ENCODE measurements at regions of chr5 and their contacts with region 1.

Region 1: GRCh38 chr5:45038366-45038987 is 229.7 kb downstream of the MRPS30 start:
- DNase-seq: peak; percentile 14
- ATAC-seq: peak; percentile 50
- H3K4me3 ChIP-seq: no peak overlapping the region
- H3K27ac ChIP-seq: no peak overlapping the region
- H3K4me1 ChIP-seq: no peaks in the 10 kb centered on the region
- H3K27me3 ChIP-seq: no peaks in the 10 kb centered on the region
- CTCF ChIP-seq: peak; percentile 51
- EP300 ChIP-seq: no peak
- POLR2A ChIP-seq: no peak
- RAD21 ChIP-seq: no peak

Region 2: DNA sequence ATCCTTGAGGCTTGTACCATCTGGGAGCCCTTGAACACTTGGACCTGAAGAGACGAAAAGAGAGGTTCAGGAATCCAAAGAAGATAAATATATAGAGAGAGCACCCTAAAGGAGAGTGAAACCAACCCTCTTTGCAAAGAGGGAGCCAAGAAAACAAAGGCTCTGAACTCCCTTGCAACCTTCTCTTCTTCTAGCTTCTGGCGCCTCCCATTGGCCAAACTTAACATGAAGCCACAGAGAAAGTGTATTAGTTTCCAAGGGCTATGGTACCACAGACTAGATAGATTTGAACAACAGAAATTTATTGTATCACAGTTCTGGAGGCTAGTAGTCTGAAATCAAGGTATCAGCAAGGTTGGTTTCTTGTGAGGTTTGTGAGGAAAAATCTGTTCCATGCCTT is 482.6 kb after region 1 on chr5:
- CTCF ChIA-PET with region 1: no interaction called
- POLR2A ChIA-PET with region 1: no interaction called
- in situ Hi-C with region 1: no loop called
- intact Hi-C with region 1: loop called (anchors 1 kb)
- DNase-seq: peak; percentile 2
- ATAC-seq: no peak
- H3K4me3 ChIP-seq: no peak overlapping the region
- H3K27ac ChIP-seq: no peak overlapping the region
- H3K4me1 ChIP-seq: no peaks in the 10 kb centered on the region
- H3K27me3 ChIP-seq: no peaks in the 10 kb centered on the region
- CTCF ChIP-seq: no peak
- EP300 ChIP-seq: no peak
- POLR2A ChIP-seq: no peak
- RAD21 ChIP-seq: no peak

Region 3: DNA sequence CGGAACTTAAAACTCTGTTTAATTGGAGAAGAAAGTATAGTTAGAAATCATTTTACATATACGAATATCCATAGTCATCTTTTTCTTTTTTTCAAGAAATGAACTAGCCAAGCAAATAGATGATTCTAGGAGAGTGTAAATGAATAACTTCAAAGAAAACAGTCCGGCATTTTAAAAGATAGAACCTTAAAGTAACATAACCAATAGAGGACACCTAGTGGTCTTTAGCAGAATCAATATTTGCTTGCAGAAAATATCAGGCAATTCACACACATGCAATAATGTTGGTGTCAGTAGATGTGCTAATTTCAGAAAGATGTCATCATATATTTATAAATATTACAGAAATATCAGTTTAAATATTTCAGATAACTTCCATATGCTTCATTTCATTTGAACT is 600.6 kb after region 1 on chr5:
- CTCF ChIA-PET with region 1: no interaction called
- POLR2A ChIA-PET with region 1: no interaction called
- in situ Hi-C with region 1: no loop called
- intact Hi-C with region 1: loop called (anchors 1 kb)
- DNase-seq: no peak
- ATAC-seq: no peak
- H3K4me3 ChIP-seq: no peak overlapping the region
- H3K27ac ChIP-seq: no peak overlapping the region
- H3K4me1 ChIP-seq: no peaks in the 10 kb centered on the region
- H3K27me3 ChIP-seq: no peaks in the 10 kb centered on the region; a peak in 1 of 5 replicates
- CTCF ChIP-seq: no peak
- EP300 ChIP-seq: no peak
- POLR2A ChIP-seq: no peak
- RAD21 ChIP-seq: no peak

Region 4: GRCh38 chr5:45696206-45696836 is 657.8 kb after region 1 on chr5 and contains the start of gene HCN1:
- CTCF ChIA-PET with region 1: no interaction called
- POLR2A ChIA-PET with region 1: no interaction called
- in situ Hi-C with region 1: no loop called
- intact Hi-C with region 1: loop called (anchors 1 kb)
- DNase-seq: peak; percentile 17
- ATAC-seq: peak; percentile 100
- H3K4me3 ChIP-seq: no peak within 1 kb of the TSS
- H3K27ac ChIP-seq: no peak within 1 kb of the TSS
- H3K4me1 ChIP-seq: no peaks in the 10 kb centered on the region
- H3K27me3 ChIP-seq: no peaks in the 10 kb centered on the region
- CTCF ChIP-seq: peak; percentile 83
- EP300 ChIP-seq: no peak
- POLR2A ChIP-seq: no peak
- RAD21 ChIP-seq: no peak
- total RNA-seq, gene HCN1: not detected in 2 replicates